Activated CD4-positive, alpha-beta memory T cell treated with anti-CD3 and anti-CD28 coated beads for 36 hours (primary cell): ENCODE measurements at regions of chr15 and their contacts with region 1.

Region 1: GRCh38 chr15:39624806-39625205 is 43.9 kb downstream of the THBS1 start:
- DNase-seq: peak; percentile 83
- H3K4me3 Mint-ChIP-seq: peak overlapping the region; percentile 65
- H3K27ac Mint-ChIP-seq: peak overlapping the region; percentile 96
- H3K4me1 Mint-ChIP-seq: peaks cover 75% of the 10 kb centered on the region
- H3K27me3 Mint-ChIP-seq: no peaks in the 10 kb centered on the region

Region 2: GRCh38 chr15:38647683-38648082 is 977.1 kb before region 1 on chr15:
- CTCF ChIA-PET with region 1: no interaction called
- POLR2A ChIA-PET with region 1: no interaction called
- intact Hi-C with region 1: loop called (anchors 1 kb)
- DNase-seq: no peak
- H3K4me3 Mint-ChIP-seq: no peak overlapping the region
- H3K27ac Mint-ChIP-seq: no peak overlapping the region
- H3K4me1 Mint-ChIP-seq: peaks cover 74% of the 10 kb centered on the region
- H3K27me3 Mint-ChIP-seq: no peaks in the 10 kb centered on the region

Region 3: GRCh38 chr15:39251413-39252133 is 373.2 kb before region 1 on chr15:
- CTCF ChIA-PET with region 1: no interaction called
- POLR2A ChIA-PET with region 1: no interaction called
- intact Hi-C with region 1: no loop called
- DNase-seq: no peak
- H3K4me3 Mint-ChIP-seq: no peak overlapping the region
- H3K27ac Mint-ChIP-seq: no peak overlapping the region
- H3K4me1 Mint-ChIP-seq: peaks cover 4% of the 10 kb centered on the region
- H3K27me3 Mint-ChIP-seq: peaks cover 3% of the 10 kb centered on the region

Region 4: GRCh38 chr15:39594056-39594763 is 30.6 kb before region 1 on chr15:
- CTCF ChIA-PET with region 1: interaction called, 3 read pairs
- POLR2A ChIA-PET with region 1: interaction called, 3 read pairs
- intact Hi-C with region 1: loop called (anchors 1 kb)
- DNase-seq: peak; percentile 63
- H3K4me3 Mint-ChIP-seq: no peak overlapping the region
- H3K27ac Mint-ChIP-seq: no peak overlapping the region
- H3K4me1 Mint-ChIP-seq: peaks cover 8% of the 10 kb centered on the region
- H3K27me3 Mint-ChIP-seq: no peaks in the 10 kb centered on the region

Region 5: DNA sequence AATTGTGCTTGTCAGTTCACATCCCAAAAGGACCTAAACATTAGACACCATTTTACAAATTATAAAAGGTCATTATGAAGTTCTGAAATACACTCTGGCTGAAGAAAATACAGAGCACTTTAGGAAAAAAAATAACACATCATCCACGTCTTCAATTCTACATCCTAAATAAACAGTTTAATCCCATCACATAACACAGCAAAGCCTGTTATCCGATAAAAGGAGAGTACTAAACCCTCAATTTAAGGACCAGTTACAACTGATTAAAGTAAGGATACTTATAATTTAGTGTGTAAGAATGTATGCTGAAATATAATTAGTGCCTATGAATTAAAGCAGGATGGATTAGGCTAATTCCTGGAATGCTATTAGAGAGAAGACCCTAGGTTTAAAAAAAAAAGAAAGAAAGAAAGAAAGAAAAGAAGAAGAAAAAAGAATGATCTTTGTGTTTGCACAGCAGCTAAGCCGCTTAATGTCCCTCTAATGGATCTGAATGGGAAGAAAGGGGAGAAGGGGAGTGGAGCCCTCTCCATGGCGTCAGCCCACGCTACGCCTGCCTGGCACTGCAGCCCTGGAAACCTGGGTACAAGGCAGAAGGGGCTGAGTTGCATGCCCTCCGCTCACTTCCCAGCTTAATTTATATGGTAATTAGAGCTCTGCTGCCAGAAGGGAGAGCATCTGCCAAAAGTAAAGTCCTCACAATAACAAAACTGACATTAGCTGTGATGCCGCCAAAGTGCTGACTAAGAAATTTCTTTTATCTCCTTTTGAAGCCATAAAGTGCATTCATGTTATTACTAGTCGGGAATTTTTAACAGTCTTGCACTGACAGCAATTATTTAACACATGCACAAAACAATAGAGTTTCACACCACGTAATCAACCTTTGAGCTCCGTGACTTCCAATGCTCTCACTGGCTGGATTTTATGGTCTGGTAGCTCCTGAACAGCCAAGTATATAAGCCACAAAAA is 67.8 kb after region 1 on chr15:
- CTCF ChIA-PET with region 1: no interaction called
- POLR2A ChIA-PET with region 1: no interaction called
- intact Hi-C with region 1: loop called (anchors 5 kb)
- DNase-seq: no peak
- H3K4me3 Mint-ChIP-seq: no peak overlapping the region
- H3K27ac Mint-ChIP-seq: no peak overlapping the region
- H3K4me1 Mint-ChIP-seq: peaks cover 5% of the 10 kb centered on the region
- H3K27me3 Mint-ChIP-seq: peaks cover 2% of the 10 kb centered on the region

Region 6: GRCh38 chr15:39920510-39921273 is 295.9 kb after region 1 on chr15:
- CTCF ChIA-PET with region 1: no interaction called
- POLR2A ChIA-PET with region 1: no interaction called
- intact Hi-C with region 1: loop called (anchors 5 kb)
- DNase-seq: peak; percentile 90
- H3K4me3 Mint-ChIP-seq: peak overlapping the region; percentile 81
- H3K27ac Mint-ChIP-seq: peak overlapping the region; percentile 56
- H3K4me1 Mint-ChIP-seq: peaks cover 18% of the 10 kb centered on the region
- H3K27me3 Mint-ChIP-seq: peaks cover 20% of the 10 kb centered on the region